B cell (primary cell): ENCODE measurements at regions of chrX and their contacts with region 1.

Region 1: DNA sequence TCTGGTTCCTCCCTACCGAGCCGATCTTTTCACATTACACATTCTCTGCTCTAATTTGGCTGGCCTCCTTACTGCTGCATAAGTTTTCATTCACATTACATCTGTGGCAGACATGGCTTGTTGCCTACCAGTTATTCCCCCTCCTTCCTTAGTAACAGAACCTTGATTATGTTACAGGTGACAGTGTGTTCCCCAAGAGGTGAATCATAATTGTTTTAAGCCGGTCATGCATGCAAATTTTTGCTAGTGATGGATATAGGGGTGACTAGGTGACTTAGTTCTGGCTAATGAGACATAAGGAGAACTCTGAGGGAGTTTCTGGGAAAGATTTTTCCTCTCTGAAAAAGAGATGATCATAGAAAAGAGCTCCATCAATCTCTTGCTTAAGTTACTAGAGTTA is 8.4 kb upstream of the LAMP2 start:
- DNase-seq: no peak
- ATAC-seq: no peak
- H3K4me3 ChIP-seq: no peak overlapping the region
- H3K4me3 Mint-ChIP-seq: no peak overlapping the region
- H3K27ac ChIP-seq: no peak overlapping the region
- H3K27ac Mint-ChIP-seq: no peak overlapping the region
- H3K4me1 ChIP-seq: no peaks in the 10 kb centered on the region
- H3K4me1 Mint-ChIP-seq: no peaks in the 10 kb centered on the region
- H3K27me3 ChIP-seq: no peaks in the 10 kb centered on the region
- H3K27me3 Mint-ChIP-seq: no peaks in the 10 kb centered on the region
- CTCF ChIP-seq: no peak

Region 2: DNA sequence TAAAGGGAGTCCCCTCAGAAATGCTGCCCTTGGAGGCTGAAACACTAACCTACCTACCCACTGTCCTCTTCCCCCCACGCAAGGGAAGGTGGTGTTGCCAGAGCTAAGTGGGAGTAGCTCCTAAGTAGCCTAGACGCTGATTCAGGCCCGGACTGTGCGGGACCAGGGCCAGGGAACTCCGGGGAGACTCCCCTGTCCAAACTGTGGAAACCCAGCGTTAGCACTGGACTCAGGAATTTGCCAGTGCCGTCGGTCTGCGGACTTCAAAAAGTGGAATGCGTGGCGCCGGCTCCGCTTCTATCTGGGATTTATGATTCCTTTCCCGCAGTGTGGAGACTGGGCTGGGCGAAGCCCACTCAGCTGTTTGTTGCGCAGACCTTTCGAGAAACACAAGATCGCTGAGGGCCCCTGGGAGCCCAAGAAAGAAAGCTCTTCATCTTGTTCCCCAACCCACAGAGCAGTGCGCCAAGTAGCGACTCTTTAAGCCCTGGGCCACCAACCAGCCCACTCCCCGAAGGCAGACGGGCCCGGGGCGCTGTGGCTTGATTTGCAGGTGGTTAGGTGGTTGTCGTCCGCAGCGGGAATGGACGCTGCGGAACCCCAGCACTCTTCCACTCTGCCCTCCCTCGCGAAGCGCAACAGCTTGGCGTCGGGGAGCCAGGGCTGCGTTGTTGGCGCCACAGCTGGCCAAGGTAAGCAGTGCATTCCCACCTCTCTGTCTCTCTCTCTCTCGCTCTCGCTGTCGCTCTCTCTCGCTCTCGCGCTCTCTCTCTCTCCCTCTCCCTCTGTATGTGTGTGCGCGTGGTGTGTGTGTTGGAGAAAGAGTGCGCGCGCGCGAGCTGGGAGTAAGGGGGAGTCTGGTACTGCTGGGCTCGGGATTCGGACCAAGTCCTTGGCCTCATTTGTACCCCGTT is 168.2 kb before region 1 on chrX:
- CTCF ChIA-PET with region 1: interaction called, 4 read pairs
- POLR2A ChIA-PET with region 1: no interaction called
- intact Hi-C with region 1: loop called (anchors 10 kb)
- DNase-seq: peak; percentile 81
- ATAC-seq: peak; percentile 95
- H3K4me3 ChIP-seq: peak overlapping the region; percentile 47 to 69 (median 61)
- H3K4me3 Mint-ChIP-seq: peak overlapping the region; percentile 92
- H3K27ac ChIP-seq: no peak overlapping the region
- H3K27ac Mint-ChIP-seq: peak overlapping the region; percentile 87
- H3K4me1 ChIP-seq: peaks cover 16 to 30% of the 10 kb centered on the region in 2 donors
- H3K4me1 Mint-ChIP-seq: peaks cover 21% of the 10 kb centered on the region
- H3K27me3 ChIP-seq: peaks cover 0 to 29% (median 12%) of the 10 kb centered on the region in 4 experiments
- H3K27me3 Mint-ChIP-seq: peaks cover 22% of the 10 kb centered on the region
- CTCF ChIP-seq: peak; percentile 51